Caco-2 (cell line): ENCODE measurements at regions of chr7 and their contacts with region 1.

Region 1: GRCh38 chr7:138981332-138982203 is at the start of gene KIAA1549:
- DNase-seq: peak; percentile 76 to 89
- H3K4me3 ChIP-seq: peak within 1 kb of the TSS; percentile 60
- H3K4me3 Mint-ChIP-seq: peak within 1 kb of the TSS; percentile 86
- H3K27ac Mint-ChIP-seq: peak within 1 kb of the TSS; percentile 75
- H3K4me1 ChIP-seq: peaks cover 21% of the 10 kb centered on the region
- H3K4me1 Mint-ChIP-seq: peaks cover 27% of the 10 kb centered on the region
- H3K27me3 ChIP-seq: no peaks in the 10 kb centered on the region
- H3K27me3 Mint-ChIP-seq: no peaks in the 10 kb centered on the region
- CTCF ChIP-seq: no peak
- total RNA-seq, gene KIAA1549: 19.9 and 21.9 TPM in 2 replicates

Region 2: GRCh38 chr7:138886501-138886917 is 95.1 kb before region 1 on chr7:
- CTCF ChIA-PET with region 1: interaction called, 6 read pairs
- POLR2A ChIA-PET with region 1: no interaction called
- intact Hi-C with region 1: loop called (anchors 2 kb)
- DNase-seq: peak in 1 of 2 experiments; percentile 55
- H3K4me3 ChIP-seq: no peak overlapping the region
- H3K4me3 Mint-ChIP-seq: no peak overlapping the region
- H3K27ac Mint-ChIP-seq: no peak overlapping the region
- H3K4me1 ChIP-seq: peaks cover 10% of the 10 kb centered on the region
- H3K4me1 Mint-ChIP-seq: peaks cover 17% of the 10 kb centered on the region
- H3K27me3 ChIP-seq: no peaks in the 10 kb centered on the region
- H3K27me3 Mint-ChIP-seq: no peaks in the 10 kb centered on the region
- CTCF ChIP-seq: peak; percentile 54 to 60

Region 3: GRCh38 chr7:138898255-138898654 is 83.3 kb before region 1 on chr7:
- CTCF ChIA-PET with region 1: no interaction called
- POLR2A ChIA-PET with region 1: no interaction called
- intact Hi-C with region 1: no loop called
- DNase-seq: no peak
- H3K4me3 ChIP-seq: no peak overlapping the region
- H3K4me3 Mint-ChIP-seq: no peak overlapping the region
- H3K27ac Mint-ChIP-seq: no peak overlapping the region
- H3K4me1 ChIP-seq: peaks cover 6% of the 10 kb centered on the region; the same call in 1 of the 2 replicates
- H3K4me1 Mint-ChIP-seq: peaks cover 8% of the 10 kb centered on the region
- H3K27me3 ChIP-seq: no peaks in the 10 kb centered on the region
- H3K27me3 Mint-ChIP-seq: no peaks in the 10 kb centered on the region
- CTCF ChIP-seq: no peak

Region 4: GRCh38 chr7:139004321-139005075 is 22.9 kb after region 1 on chr7:
- CTCF ChIA-PET with region 1: no interaction called
- POLR2A ChIA-PET with region 1: no interaction called
- intact Hi-C with region 1: loop called (anchors 2 kb)
- DNase-seq: peak; percentile 61 to 77
- H3K4me3 ChIP-seq: no peak overlapping the region
- H3K4me3 Mint-ChIP-seq: no peak overlapping the region
- H3K27ac Mint-ChIP-seq: peak overlapping the region; percentile 86
- H3K4me1 ChIP-seq: peaks cover 39% of the 10 kb centered on the region
- H3K4me1 Mint-ChIP-seq: peaks cover 37% of the 10 kb centered on the region
- H3K27me3 ChIP-seq: no peaks in the 10 kb centered on the region
- H3K27me3 Mint-ChIP-seq: no peaks in the 10 kb centered on the region
- CTCF ChIP-seq: no peak